IMR-90 (cell line): ENCODE measurements at regions of chr20 and their contacts with region 1.

Region 1: GRCh38 chr20:34312544-34313217 is 9.5 kb upstream of the AHCY start:
- DNase-seq: peak; percentile 81
- ATAC-seq: peak; percentile 97
- H3K4me3 ChIP-seq: peak overlapping the region; percentile 17; the same call in 1 of the 2 replicates
- H3K27ac ChIP-seq: no peak overlapping the region
- H3K4me1 ChIP-seq: peaks cover 4% of the 10 kb centered on the region
- H3K27me3 ChIP-seq: no peaks in the 10 kb centered on the region
- CTCF ChIP-seq: peak; percentile 100; the same call in 1 of the 2 replicates
- POLR2A ChIP-seq: peak; percentile 63; the same call in 1 of the 2 replicates
- RAD21 ChIP-seq: peak; percentile 100

Region 2: DNA sequence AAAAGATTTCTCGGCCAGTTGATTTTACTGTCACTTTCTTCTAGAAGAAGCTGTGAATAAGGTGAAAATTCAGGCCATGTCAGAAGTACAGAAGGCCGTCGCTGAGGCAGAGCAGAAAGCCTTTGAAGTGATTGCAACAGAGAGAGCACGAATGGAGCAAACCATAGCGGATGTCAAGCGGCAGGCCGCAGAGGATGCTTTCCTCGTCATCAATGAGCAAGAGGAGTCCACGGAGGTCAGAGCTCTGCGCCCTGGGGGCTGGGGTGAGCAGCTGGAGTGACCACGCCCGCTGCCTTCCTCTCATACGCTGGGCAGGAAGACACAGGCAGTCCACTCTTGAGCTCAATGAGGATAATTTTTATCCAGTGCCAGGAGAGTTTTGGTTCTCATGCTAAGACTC is 672.4 kb before region 1 on chr20:
- CTCF ChIA-PET with region 1: no interaction called
- POLR2A ChIA-PET with region 1: no interaction called
- dilution Hi-C with region 1: no loop called
- in situ Hi-C with region 1: no loop called
- intact Hi-C with region 1: no loop called
- DNase-seq: no peak
- ATAC-seq: no peak
- H3K4me3 ChIP-seq: no peak overlapping the region
- H3K27ac ChIP-seq: no peak overlapping the region
- H3K4me1 ChIP-seq: no peaks in the 10 kb centered on the region; the same call in 1 of the 2 replicates
- H3K27me3 ChIP-seq: no peaks in the 10 kb centered on the region
- CTCF ChIP-seq: no peak
- POLR2A ChIP-seq: no peak
- RAD21 ChIP-seq: no peak

Region 3: GRCh38 chr20:34363062-34363464 is 50.4 kb after region 1 on chr20 and contains the start of gene ITCH:
- CTCF ChIA-PET with region 1: interaction called, 8 read pairs
- POLR2A ChIA-PET with region 1: no interaction called
- dilution Hi-C with region 1: no loop called
- in situ Hi-C with region 1: no loop called
- intact Hi-C with region 1: loop called (anchors 5 kb)
- DNase-seq: peak; percentile 95
- ATAC-seq: peak; percentile 99
- H3K4me3 ChIP-seq: peak within 1 kb of the TSS; percentile 97
- H3K27ac ChIP-seq: peak within 1 kb of the TSS; percentile 100
- H3K4me1 ChIP-seq: peaks cover 8% of the 10 kb centered on the region; the same call in 1 of the 2 replicates
- H3K27me3 ChIP-seq: no peaks in the 10 kb centered on the region
- CTCF ChIP-seq: no peak
- POLR2A ChIP-seq: peak; percentile 94
- RAD21 ChIP-seq: no peak
- total RNA-seq, gene ITCH: 94.6 and 103 TPM in 2 replicates

Region 4: DNA sequence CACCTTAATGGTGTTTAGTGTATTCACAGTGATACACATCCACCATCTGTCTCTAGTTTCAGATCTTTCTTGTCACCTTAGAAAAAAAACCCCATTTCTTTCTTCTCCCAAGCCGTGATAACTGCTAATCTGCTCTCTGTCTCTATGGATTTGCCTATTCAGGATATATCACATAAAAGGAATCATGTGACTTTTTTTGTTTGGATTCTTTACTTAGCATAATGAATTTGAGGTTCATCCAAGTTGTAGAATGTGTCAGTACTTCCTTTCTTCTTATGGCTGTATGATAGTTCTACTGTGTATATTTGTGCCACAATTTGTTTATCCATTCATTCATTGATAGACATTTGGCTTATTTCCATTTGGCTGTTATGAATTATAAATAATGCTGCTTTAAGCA is 107.5 kb after region 1 on chr20:
- CTCF ChIA-PET with region 1: interaction called, 6 read pairs
- POLR2A ChIA-PET with region 1: no interaction called
- dilution Hi-C with region 1: no loop called
- in situ Hi-C with region 1: no loop called
- intact Hi-C with region 1: loop called (anchors 5 kb)
- DNase-seq: peak; percentile 21
- ATAC-seq: peak; percentile 62
- H3K4me3 ChIP-seq: no peak overlapping the region
- H3K27ac ChIP-seq: no peak overlapping the region
- H3K4me1 ChIP-seq: peaks cover 3% of the 10 kb centered on the region; the same call in 1 of the 2 replicates
- H3K27me3 ChIP-seq: no peaks in the 10 kb centered on the region
- CTCF ChIP-seq: no peak
- POLR2A ChIP-seq: no peak
- RAD21 ChIP-seq: no peak

Region 5: GRCh38 chr20:34473262-34473883 is 160.7 kb after region 1 on chr20:
- CTCF ChIA-PET with region 1: interaction called, 15 read pairs
- POLR2A ChIA-PET with region 1: no interaction called
- dilution Hi-C with region 1: no loop called
- in situ Hi-C with region 1: loop called (anchors 10 kb)
- intact Hi-C with region 1: loop called (anchors 5 kb)
- DNase-seq: peak; percentile 66
- ATAC-seq: peak; percentile 60
- H3K4me3 ChIP-seq: no peak overlapping the region
- H3K27ac ChIP-seq: no peak overlapping the region
- H3K4me1 ChIP-seq: peaks cover 2% of the 10 kb centered on the region; the same call in 1 of the 2 replicates
- H3K27me3 ChIP-seq: no peaks in the 10 kb centered on the region
- CTCF ChIP-seq: peak; percentile 46
- POLR2A ChIP-seq: no peak
- RAD21 ChIP-seq: peak; percentile 51; the same call in 1 of the 2 replicates

Region 6: GRCh38 chr20:34522969-34523871 is 210.5 kb after region 1 on chr20:
- CTCF ChIA-PET with region 1: interaction called, 24 read pairs
- POLR2A ChIA-PET with region 1: no interaction called
- dilution Hi-C with region 1: no loop called
- in situ Hi-C with region 1: loop called (anchors 5 kb)
- intact Hi-C with region 1: loop called (anchors 2 kb)
- DNase-seq: peak; percentile 81
- ATAC-seq: peak; percentile 8
- H3K4me3 ChIP-seq: no peak overlapping the region
- H3K27ac ChIP-seq: peak overlapping the region; percentile 86
- H3K4me1 ChIP-seq: peaks cover 34% of the 10 kb centered on the region
- H3K27me3 ChIP-seq: no peaks in the 10 kb centered on the region
- CTCF ChIP-seq: peak; percentile 72
- POLR2A ChIP-seq: no peak
- RAD21 ChIP-seq: peak; percentile 82

Region 7: DNA sequence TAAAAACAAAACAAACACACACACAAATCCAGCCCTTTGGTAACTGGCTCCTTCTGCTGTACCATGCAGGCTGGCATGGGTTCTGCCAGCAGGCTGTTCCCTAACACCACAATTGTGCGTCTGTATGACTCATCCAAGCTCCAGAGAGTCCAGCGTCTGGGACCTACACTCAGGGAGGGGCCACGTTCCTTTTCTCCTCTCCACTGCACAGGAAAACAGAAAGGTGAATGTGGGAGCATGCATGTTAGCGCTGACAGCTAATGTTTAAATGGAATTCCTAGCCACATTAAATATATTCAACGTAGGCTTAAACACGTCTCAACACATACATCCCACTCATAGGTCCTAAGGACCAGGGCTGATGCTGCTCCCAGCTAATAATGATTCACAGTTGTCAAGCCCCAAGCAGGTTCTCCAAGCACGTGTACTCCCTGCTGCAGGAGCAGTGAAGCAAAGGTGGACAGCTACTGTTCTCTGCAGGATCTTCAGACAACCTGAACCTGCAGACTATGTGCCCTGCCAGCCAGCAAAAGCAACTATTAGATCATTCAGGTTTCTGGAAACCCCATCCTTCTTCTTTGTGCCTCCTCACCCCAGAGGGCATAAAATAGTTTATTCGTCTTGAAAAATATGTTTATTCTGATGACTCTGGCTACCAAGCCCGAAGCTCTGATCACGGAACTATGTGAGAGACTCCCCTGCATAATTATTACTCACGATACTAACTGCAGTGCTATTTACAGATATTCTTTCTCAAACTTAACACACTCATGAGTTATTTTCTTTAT is 266.7 kb after region 1 on chr20:
- CTCF ChIA-PET with region 1: no interaction called
- POLR2A ChIA-PET with region 1: no interaction called
- dilution Hi-C with region 1: no loop called
- in situ Hi-C with region 1: no loop called
- intact Hi-C with region 1: no loop called
- DNase-seq: peak; percentile 82
- ATAC-seq: peak; percentile 89
- H3K4me3 ChIP-seq: no peak overlapping the region
- H3K27ac ChIP-seq: no peak overlapping the region
- H3K4me1 ChIP-seq: peaks cover 17% of the 10 kb centered on the region
- H3K27me3 ChIP-seq: no peaks in the 10 kb centered on the region
- CTCF ChIP-seq: peak; percentile 84
- POLR2A ChIP-seq: no peak
- RAD21 ChIP-seq: peak; percentile 89

Region 8: GRCh38 chr20:34768096-34768495 is 455.4 kb after region 1 on chr20:
- CTCF ChIA-PET with region 1: interaction called, 6 read pairs
- POLR2A ChIA-PET with region 1: no interaction called
- dilution Hi-C with region 1: no loop called
- in situ Hi-C with region 1: no loop called
- intact Hi-C with region 1: loop called (anchors 2 kb)
- DNase-seq: peak; percentile 80
- ATAC-seq: peak; percentile 75
- H3K4me3 ChIP-seq: no peak overlapping the region
- H3K27ac ChIP-seq: peak overlapping the region; percentile 68
- H3K4me1 ChIP-seq: peaks cover 12% of the 10 kb centered on the region
- H3K27me3 ChIP-seq: no peaks in the 10 kb centered on the region
- CTCF ChIP-seq: no peak
- POLR2A ChIP-seq: no peak
- RAD21 ChIP-seq: no peak